CD4-positive, alpha-beta memory T cell (primary cell): ENCODE measurements at regions of chr7 and their contacts with region 1.

Region 1: GRCh38 chr7:142796608-142797385 is 26.0 kb downstream of the PRSS2 start:
- DNase-seq: peak in 2 of 5 donors; percentile 41 to 47
- H3K4me3 ChIP-seq: peak overlapping the region; percentile 84 to 85
- H3K4me3 Mint-ChIP-seq: peak overlapping the region; percentile 93 to 100 (median 99)
- H3K27ac ChIP-seq: peak overlapping the region; percentile 99
- H3K27ac Mint-ChIP-seq: peak overlapping the region; percentile 98 to 100 (median 100)
- H3K4me1 ChIP-seq: peaks cover 68% of the 10 kb centered on the region
- H3K4me1 Mint-ChIP-seq: peaks cover 50 to 79% (median 62%) of the 10 kb centered on the region in 4 donors
- H3K27me3 ChIP-seq: no peaks in the 10 kb centered on the region
- H3K27me3 Mint-ChIP-seq: no peaks in the 10 kb centered on the region

Region 2: DNA sequence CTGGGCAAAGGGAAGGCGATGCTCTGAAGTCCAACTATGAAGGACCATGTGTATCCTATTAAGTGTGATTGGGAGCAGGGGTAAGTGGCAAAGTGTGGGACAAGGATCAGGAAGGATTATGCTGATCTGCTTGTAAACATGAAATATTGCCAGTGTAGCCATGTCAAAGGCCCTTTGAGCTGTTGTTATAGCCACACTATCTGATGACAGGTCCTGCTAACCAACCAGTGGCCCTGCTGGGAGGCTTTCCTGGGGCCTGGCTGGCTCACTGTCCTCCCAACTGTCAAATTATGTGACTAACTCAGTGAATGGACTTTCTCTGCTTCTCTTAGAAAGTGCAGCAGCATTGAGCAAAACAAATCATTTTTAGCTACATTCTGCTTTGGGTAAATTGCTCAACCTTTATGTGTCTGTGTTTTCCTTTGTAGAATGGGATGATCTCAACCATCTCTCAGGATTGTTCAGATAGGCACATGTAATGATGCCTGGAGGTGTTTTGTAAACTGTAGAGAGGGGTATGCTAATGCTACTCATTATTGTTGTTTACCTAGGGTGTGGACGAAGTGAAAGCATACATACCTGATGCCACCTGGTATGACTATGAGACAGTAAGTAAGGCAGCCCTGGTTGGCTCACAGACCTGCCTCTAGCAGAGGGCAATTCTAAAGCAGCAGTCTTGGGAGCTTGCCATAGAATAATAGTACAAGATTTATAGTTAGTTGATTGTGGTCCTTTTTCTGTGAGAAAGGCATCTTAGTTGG is 637.9 kb before region 1 on chr7:
- CTCF ChIA-PET with region 1: no interaction called
- POLR2A ChIA-PET with region 1: no interaction called
- intact Hi-C with region 1: no loop called
- DNase-seq: no peak
- H3K4me3 ChIP-seq: no peak overlapping the region
- H3K4me3 Mint-ChIP-seq: no peak overlapping the region
- H3K27ac ChIP-seq: no peak overlapping the region
- H3K27ac Mint-ChIP-seq: no peak overlapping the region
- H3K4me1 ChIP-seq: no peaks in the 10 kb centered on the region
- H3K4me1 Mint-ChIP-seq: no peaks in the 10 kb centered on the region
- H3K27me3 ChIP-seq: no peaks in the 10 kb centered on the region
- H3K27me3 Mint-ChIP-seq: peaks cover 2 to 3% of the 10 kb centered on the region in 2 donors

Region 3: GRCh38 chr7:142338633-142339501 is 457.9 kb before region 1 on chr7:
- CTCF ChIA-PET with region 1: no interaction called
- POLR2A ChIA-PET with region 1: interaction called, 12 read pairs
- intact Hi-C with region 1: no loop called
- DNase-seq: no peak
- H3K4me3 ChIP-seq: no peak overlapping the region
- H3K4me3 Mint-ChIP-seq: peak overlapping the region in 2 of 8 donors; percentile 7 to 63
- H3K27ac ChIP-seq: no peak overlapping the region
- H3K27ac Mint-ChIP-seq: peak overlapping the region in 5 of 7 donors; percentile 21 to 68 (median 35)
- H3K4me1 ChIP-seq: no peaks in the 10 kb centered on the region
- H3K4me1 Mint-ChIP-seq: peaks cover 0 to 17% (median 6%) of the 10 kb centered on the region in 4 donors
- H3K27me3 ChIP-seq: no peaks in the 10 kb centered on the region
- H3K27me3 Mint-ChIP-seq: peaks cover 6 to 9% of the 10 kb centered on the region in 2 donors

Region 4: GRCh38 chr7:142438235-142438922 is 358.4 kb before region 1 on chr7:
- CTCF ChIA-PET with region 1: no interaction called
- POLR2A ChIA-PET with region 1: interaction called, 35 read pairs
- intact Hi-C with region 1: no loop called
- DNase-seq: peak in 4 of 5 donors; percentile 15 to 33 (median 26)
- H3K4me3 ChIP-seq: no peak overlapping the region
- H3K4me3 Mint-ChIP-seq: peak overlapping the region in 4 of 8 donors; percentile 0 to 58 (median 40)
- H3K27ac ChIP-seq: no peak overlapping the region
- H3K27ac Mint-ChIP-seq: peak overlapping the region in 2 of 7 donors; percentile 13 to 49
- H3K4me1 ChIP-seq: peaks cover 47% of the 10 kb centered on the region
- H3K4me1 Mint-ChIP-seq: peaks cover 38 to 71% (median 55%) of the 10 kb centered on the region in 4 donors
- H3K27me3 ChIP-seq: no peaks in the 10 kb centered on the region
- H3K27me3 Mint-ChIP-seq: no peaks in the 10 kb centered on the region

Region 5: DNA sequence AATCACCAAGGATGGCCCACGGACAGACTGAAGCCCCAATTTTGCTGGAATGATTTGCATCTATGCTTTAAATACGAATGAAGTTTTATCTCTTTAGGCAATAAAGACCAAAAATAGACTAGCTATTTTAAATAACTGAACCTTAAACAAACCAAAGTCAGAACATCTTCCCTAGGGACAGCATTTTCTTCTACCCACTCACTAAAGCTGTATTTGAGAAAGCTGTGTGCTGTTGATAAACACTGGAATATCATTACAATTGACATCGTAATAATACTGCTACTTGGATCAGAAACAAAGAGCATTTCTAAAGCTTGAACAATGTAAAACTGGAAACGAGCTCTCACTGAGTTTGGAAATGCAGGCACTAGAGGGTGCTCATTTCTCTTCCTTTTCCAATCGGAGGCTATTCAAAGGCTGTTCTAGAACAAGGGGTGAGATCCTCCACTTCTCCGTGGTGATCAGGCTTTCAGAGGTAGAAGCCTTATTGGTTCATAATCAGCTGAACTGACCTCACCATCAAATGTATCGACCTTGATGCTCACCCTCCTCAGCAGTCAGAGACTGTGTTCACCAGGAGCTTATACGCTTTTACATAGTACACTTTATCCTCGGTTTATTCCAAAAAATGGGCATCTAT is 272.9 kb before region 1 on chr7:
- CTCF ChIA-PET with region 1: no interaction called
- POLR2A ChIA-PET with region 1: interaction called, 48 read pairs
- intact Hi-C with region 1: no loop called
- DNase-seq: no peak
- H3K4me3 ChIP-seq: no peak overlapping the region
- H3K4me3 Mint-ChIP-seq: no peak overlapping the region
- H3K27ac ChIP-seq: no peak overlapping the region
- H3K27ac Mint-ChIP-seq: peak overlapping the region in 1 of 7 donors; percentile 20
- H3K4me1 ChIP-seq: peaks cover 12% of the 10 kb centered on the region
- H3K4me1 Mint-ChIP-seq: peaks cover 5 to 16% (median 9%) of the 10 kb centered on the region in 4 donors
- H3K27me3 ChIP-seq: no peaks in the 10 kb centered on the region
- H3K27me3 Mint-ChIP-seq: no peaks in the 10 kb centered on the region

Region 6: DNA sequence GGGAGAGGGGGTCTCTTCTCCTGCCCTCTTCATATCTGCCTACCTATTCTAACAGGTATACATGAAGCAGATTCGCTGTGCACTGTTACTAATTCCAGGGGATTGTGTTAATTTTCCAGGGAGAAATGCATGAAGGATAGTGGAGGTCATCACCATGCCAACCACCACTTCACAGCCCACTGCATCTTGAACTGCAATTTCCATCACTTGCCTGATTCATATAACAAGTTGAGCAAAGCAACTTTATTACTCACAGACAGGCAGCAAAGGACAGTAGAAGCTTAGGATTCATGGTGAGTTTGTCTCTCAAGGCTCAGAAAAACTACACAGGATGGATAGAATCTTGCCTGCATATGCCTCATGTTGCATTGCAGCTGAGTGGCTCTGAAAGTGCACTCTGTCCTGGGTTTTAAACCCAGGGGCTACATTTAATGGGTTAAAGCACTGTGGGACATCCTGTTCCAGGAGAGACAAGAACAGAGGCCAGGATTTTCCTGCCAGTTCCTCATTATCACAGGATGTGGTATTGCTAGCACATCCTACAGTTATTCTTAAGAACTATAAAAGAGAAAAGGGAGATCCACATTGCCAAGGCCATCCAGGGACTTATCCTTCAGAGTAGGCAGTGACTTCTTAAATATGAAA is 184.4 kb before region 1 on chr7:
- CTCF ChIA-PET with region 1: no interaction called
- POLR2A ChIA-PET with region 1: interaction called, 65 read pairs
- intact Hi-C with region 1: loop called (anchors 5 kb)
- DNase-seq: no peak
- H3K4me3 ChIP-seq: no peak overlapping the region
- H3K4me3 Mint-ChIP-seq: no peak overlapping the region
- H3K27ac ChIP-seq: no peak overlapping the region
- H3K27ac Mint-ChIP-seq: peak overlapping the region in 5 of 7 donors; percentile 8 to 83 (median 48)
- H3K4me1 ChIP-seq: peaks cover 13% of the 10 kb centered on the region
- H3K4me1 Mint-ChIP-seq: peaks cover 7 to 24% (median 15%) of the 10 kb centered on the region in 4 donors
- H3K27me3 ChIP-seq: no peaks in the 10 kb centered on the region
- H3K27me3 Mint-ChIP-seq: no peaks in the 10 kb centered on the region

Region 7: GRCh38 chr7:142720172-142720773 is 76.5 kb before region 1 on chr7:
- CTCF ChIA-PET with region 1: interaction called, 11 read pairs
- POLR2A ChIA-PET with region 1: interaction called, 117 read pairs
- intact Hi-C with region 1: no loop called
- DNase-seq: peak in 1 of 5 donors; percentile 41
- H3K4me3 ChIP-seq: no peak overlapping the region
- H3K4me3 Mint-ChIP-seq: peak overlapping the region; percentile 61 to 80 (median 78)
- H3K27ac ChIP-seq: peak overlapping the region; percentile 26
- H3K27ac Mint-ChIP-seq: peak overlapping the region; percentile 80 to 98 (median 88)
- H3K4me1 ChIP-seq: peaks cover 44% of the 10 kb centered on the region
- H3K4me1 Mint-ChIP-seq: peaks cover 16 to 44% (median 28%) of the 10 kb centered on the region in 4 donors
- H3K27me3 ChIP-seq: no peaks in the 10 kb centered on the region
- H3K27me3 Mint-ChIP-seq: no peaks in the 10 kb centered on the region